ENCODE measurements at regions of chr2 and their contacts with region 1.

Region 1: GRCh38 chr2:64922482-64923384 is 66.5 kb upstream of the SLC1A4 start:
- DNase-seq: peak; percentile 59
- H3K4me3 ChIP-seq: no peak overlapping the region
- H3K27ac ChIP-seq: no peak overlapping the region
- H3K4me1 ChIP-seq: peaks cover 7% of the 10 kb centered on the region
- H3K27me3 ChIP-seq: no peaks in the 10 kb centered on the region
- CTCF ChIP-seq: no peak
- POLR2A ChIP-seq: no peak

Region 2: DNA sequence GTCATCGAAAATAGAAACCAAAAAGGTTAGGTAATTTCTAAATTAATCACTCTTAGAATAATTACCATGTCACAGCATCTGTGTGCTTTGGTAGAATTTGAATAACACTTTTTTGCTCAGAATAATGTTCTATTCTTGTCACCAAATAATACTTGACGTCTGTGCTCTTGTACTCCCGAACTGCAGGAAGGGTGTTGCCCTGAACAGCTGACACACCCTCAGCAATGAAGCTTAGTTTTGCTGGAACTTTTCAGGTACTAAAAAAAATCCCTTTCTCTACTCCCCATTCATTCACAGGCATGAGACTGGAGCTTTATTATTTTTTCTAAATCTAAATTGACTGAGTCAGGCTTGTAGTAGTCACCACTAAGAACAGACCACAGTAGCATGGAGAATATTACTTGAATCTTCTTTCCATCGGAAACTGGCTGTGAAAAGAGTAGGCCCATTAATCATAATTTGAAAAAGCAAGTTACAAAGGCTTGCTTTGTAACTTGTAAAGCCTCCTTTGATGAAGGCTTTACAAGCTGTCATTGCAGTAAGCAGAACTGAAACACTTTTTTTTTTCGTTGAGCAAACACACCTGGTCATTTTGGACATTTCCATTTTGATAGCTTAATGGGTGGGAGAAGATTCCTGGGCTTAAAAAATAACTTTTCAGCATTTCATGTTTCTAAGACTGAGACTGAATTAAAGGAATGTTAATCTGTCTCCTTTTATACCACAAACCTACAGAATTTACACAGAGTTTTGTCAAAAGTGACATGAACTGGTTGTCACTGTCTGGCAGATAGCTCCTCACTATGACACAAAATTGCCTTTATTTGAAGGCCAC is 708.2 kb before region 1 on chr2:
- intact Hi-C with region 1: no loop called
- DNase-seq: no peak
- H3K4me3 ChIP-seq: no peak overlapping the region
- H3K27ac ChIP-seq: peak overlapping the region; percentile 25 to 54
- H3K4me1 ChIP-seq: peaks cover under 1% of the 10 kb centered on the region
- H3K27me3 ChIP-seq: no peaks in the 10 kb centered on the region
- CTCF ChIP-seq: no peak
- POLR2A ChIP-seq: no peak

Region 3: DNA sequence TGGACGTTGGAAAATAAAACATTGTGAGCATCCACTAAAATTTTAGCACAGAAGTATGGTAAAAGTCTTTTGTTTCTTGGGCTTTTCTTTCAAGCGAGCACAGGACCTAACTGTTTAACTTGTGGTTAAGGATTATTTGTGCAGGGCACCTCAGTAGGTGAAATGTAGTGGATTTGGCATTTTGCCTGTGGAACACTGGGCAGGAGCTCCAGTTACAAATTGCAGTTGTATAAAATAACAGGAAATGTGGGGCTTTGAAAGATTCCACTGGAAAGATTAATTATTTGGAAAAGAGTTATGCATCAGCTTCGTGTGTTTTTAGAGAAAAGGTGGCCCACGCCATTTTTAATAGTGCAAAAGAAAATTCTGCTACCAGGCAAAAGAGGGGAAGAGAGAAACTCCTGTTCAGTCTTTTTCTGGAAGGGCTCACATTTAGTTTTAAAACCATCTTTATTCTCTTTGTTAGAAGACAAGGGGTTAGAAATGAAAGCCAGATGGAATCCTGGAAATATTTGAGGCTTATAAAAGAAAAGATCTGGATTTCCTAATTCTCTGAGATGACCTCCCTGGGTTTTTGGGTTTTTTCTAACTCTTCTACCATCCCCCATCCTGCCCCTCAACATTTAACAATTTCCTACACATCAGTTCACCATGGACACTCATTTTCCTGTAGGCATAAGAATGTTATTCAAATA is 124.7 kb before region 1 on chr2:
- intact Hi-C with region 1: no loop called
- DNase-seq: no peak
- H3K4me3 ChIP-seq: no peak overlapping the region
- H3K27ac ChIP-seq: no peak overlapping the region
- H3K4me1 ChIP-seq: no peaks in the 10 kb centered on the region
- H3K27me3 ChIP-seq: no peaks in the 10 kb centered on the region
- CTCF ChIP-seq: no peak
- POLR2A ChIP-seq: no peak

Region 4: GRCh38 chr2:64988420-64989125 is 65.8 kb after region 1 on chr2:
- intact Hi-C with region 1: loop called (anchors 5 kb)
- DNase-seq: peak; percentile 72
- H3K4me3 ChIP-seq: peak overlapping the region; percentile 69 to 72
- H3K27ac ChIP-seq: peak overlapping the region; percentile 85 to 95
- H3K4me1 ChIP-seq: peaks cover 5% of the 10 kb centered on the region
- H3K27me3 ChIP-seq: no peaks in the 10 kb centered on the region
- CTCF ChIP-seq: peak in 2 of 3 experiments; percentile 43 to 51
- POLR2A ChIP-seq: peak; percentile 21